WTC11 (cell line): ENCODE measurements at regions of chr14 and their contacts with region 1.

Region 1: GRCh38 chr14:87955501-87955900 is 37.5 kb downstream of the GALC start:
- DNase-seq: no peak
- ATAC-seq: no peak
- H3K4me3 Mint-ChIP-seq: no peak overlapping the region
- H3K27ac Mint-ChIP-seq: no peak overlapping the region
- H3K4me1 Mint-ChIP-seq: peaks cover 2% of the 10 kb centered on the region; the same call in 1 of the 2 replicates
- H3K27me3 Mint-ChIP-seq: no peaks in the 10 kb centered on the region
- CTCF ChIP-seq: no peak

Region 2: GRCh38 chr14:87944987-87945604 is 10.4 kb before region 1 on chr14:
- CTCF ChIA-PET with region 1: interaction called, 11 read pairs
- POLR2A ChIA-PET with region 1: no interaction called
- DNase-seq: no peak
- ATAC-seq: peak; percentile 30; the same call in 1 of the 2 replicates
- H3K4me3 Mint-ChIP-seq: no peak overlapping the region
- H3K27ac Mint-ChIP-seq: no peak overlapping the region
- H3K4me1 Mint-ChIP-seq: peaks cover 3% of the 10 kb centered on the region
- H3K27me3 Mint-ChIP-seq: no peaks in the 10 kb centered on the region
- CTCF ChIP-seq: peak; percentile 53

Region 3: GRCh38 chr14:87994974-87995373 is 39.5 kb after region 1 on chr14:
- CTCF ChIA-PET with region 1: no interaction called
- POLR2A ChIA-PET with region 1: no interaction called
- DNase-seq: no peak
- ATAC-seq: no peak
- H3K4me3 Mint-ChIP-seq: no peak overlapping the region
- H3K27ac Mint-ChIP-seq: no peak overlapping the region
- H3K4me1 Mint-ChIP-seq: peaks cover 25% of the 10 kb centered on the region
- H3K27me3 Mint-ChIP-seq: no peaks in the 10 kb centered on the region; the same call in 1 of the 2 replicates
- CTCF ChIP-seq: no peak

Region 4: GRCh38 chr14:88044851-88045339 is 89.4 kb after region 1 on chr14:
- CTCF ChIA-PET with region 1: no interaction called
- POLR2A ChIA-PET with region 1: no interaction called
- DNase-seq: no peak
- ATAC-seq: no peak
- H3K4me3 Mint-ChIP-seq: no peak overlapping the region
- H3K27ac Mint-ChIP-seq: no peak overlapping the region
- H3K4me1 Mint-ChIP-seq: no peaks in the 10 kb centered on the region
- H3K27me3 Mint-ChIP-seq: no peaks in the 10 kb centered on the region
- CTCF ChIP-seq: no peak

Region 5: GRCh38 chr14:88181072-88181471 is 225.6 kb after region 1 on chr14:
- CTCF ChIA-PET with region 1: no interaction called
- POLR2A ChIA-PET with region 1: no interaction called
- DNase-seq: no peak
- ATAC-seq: no peak
- H3K4me3 Mint-ChIP-seq: no peak overlapping the region
- H3K27ac Mint-ChIP-seq: no peak overlapping the region
- H3K4me1 Mint-ChIP-seq: peaks cover 6% of the 10 kb centered on the region
- H3K27me3 Mint-ChIP-seq: no peaks in the 10 kb centered on the region
- CTCF ChIP-seq: no peak